WTC11 (cell line): ENCODE measurements at regions of chr2 and their contacts with region 1.

Region 1: DNA sequence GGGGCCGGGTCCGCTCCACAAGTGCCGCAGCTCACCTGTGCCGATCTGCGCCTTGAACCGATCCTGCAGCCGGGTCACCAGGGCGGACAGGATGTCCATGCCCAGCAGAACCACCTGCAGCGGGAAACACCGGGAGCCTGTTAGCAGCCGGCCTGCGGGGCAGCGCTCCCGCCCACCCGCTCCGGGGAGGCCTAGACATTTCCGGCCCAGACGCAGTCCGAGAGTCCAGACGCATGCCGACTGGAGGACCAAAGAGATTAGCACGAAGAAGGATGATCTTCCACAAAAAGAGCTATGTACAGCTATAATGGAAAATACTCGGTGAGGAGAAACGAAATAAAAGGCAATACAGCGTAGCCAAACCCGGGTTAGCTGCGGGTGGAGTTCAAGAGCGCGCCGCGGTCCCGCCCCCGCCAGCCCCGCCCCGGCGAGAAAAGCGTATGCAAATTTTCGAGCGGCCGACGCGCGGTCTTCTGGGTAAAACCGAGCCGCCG is 421 bp upstream of the RNU4ATAC start:
- DNase-seq: peak; percentile 80
- ATAC-seq: peak; percentile 57
- H3K4me3 Mint-ChIP-seq: peak overlapping the region; percentile 91
- H3K27ac Mint-ChIP-seq: peak overlapping the region; percentile 100
- H3K4me1 Mint-ChIP-seq: peaks cover 47% of the 10 kb centered on the region
- H3K27me3 Mint-ChIP-seq: no peaks in the 10 kb centered on the region
- CTCF ChIP-seq: no peak

Region 2: GRCh38 chr2:121649596-121650314 is 119.5 kb after region 1 on chr2:
- CTCF ChIA-PET with region 1: interaction called, 7 read pairs
- POLR2A ChIA-PET with region 1: interaction called, 27 read pairs
- DNase-seq: peak; percentile 94
- ATAC-seq: peak; percentile 97
- H3K4me3 Mint-ChIP-seq: peak overlapping the region; percentile 93
- H3K27ac Mint-ChIP-seq: peak overlapping the region; percentile 100
- H3K4me1 Mint-ChIP-seq: peaks cover 22% of the 10 kb centered on the region
- H3K27me3 Mint-ChIP-seq: no peaks in the 10 kb centered on the region
- CTCF ChIP-seq: no peak